Activated naive CD4-positive, alpha-beta T cell treated with anti-CD3 and anti-CD28 coated beads for 36 hours (primary cell): ENCODE measurements at regions of chr14 and their contacts with region 1.

Region 1: GRCh38 chr14:81220830-81221578 is at the start of gene GTF2A1:
- DNase-seq: peak; percentile 94
- H3K4me3 Mint-ChIP-seq: peak within 1 kb of the TSS; percentile 94
- H3K27ac Mint-ChIP-seq: peak within 1 kb of the TSS; percentile 100
- H3K4me1 Mint-ChIP-seq: peaks cover 25% of the 10 kb centered on the region
- H3K27me3 Mint-ChIP-seq: no peaks in the 10 kb centered on the region
- total RNA-seq, gene GTF2A1: 38.3 to 42.9 TPM

Region 2: GRCh38 chr14:80587075-80587724 is 633.8 kb before region 1 on chr14:
- CTCF ChIA-PET with region 1: no interaction called
- intact Hi-C with region 1: loop called (anchors 1 kb)
- DNase-seq: peak; percentile 9
- H3K4me3 Mint-ChIP-seq: no peak overlapping the region
- H3K27ac Mint-ChIP-seq: peak overlapping the region; percentile 39
- H3K4me1 Mint-ChIP-seq: peaks cover 14% of the 10 kb centered on the region
- H3K27me3 Mint-ChIP-seq: no peaks in the 10 kb centered on the region

Region 3: DNA sequence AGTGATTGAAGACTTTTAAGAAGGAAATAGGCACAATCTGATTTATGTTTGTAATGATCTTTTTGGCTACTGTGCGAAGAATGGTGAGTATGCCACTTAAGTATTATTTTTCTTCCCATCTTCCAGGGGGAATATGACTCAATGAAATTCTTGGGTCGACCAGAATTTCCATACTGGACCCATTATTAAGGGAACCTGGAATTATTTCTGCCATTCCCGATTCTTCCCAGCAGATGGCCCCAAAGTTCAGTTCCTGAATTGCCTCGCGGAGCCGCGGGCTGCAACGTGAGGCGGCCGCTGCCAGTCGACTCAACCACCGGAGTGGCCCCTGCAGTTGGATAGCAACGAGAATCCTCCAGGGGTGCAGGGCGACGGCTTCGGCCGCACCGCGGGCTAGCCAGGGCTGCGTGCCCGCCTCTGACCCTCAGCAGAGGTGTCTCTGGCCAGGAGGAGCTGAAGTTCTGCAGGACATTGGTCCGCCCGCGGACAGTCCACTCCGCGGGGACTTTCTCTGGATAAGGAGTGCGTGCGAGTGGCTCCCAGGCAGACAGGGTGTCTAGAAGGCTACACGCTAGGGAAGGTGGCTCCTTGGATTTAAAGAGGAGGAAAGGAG is 266.2 kb before region 1 on chr14:
- CTCF ChIA-PET with region 1: no interaction called
- intact Hi-C with region 1: loop called (anchors 1 kb)
- DNase-seq: peak; percentile 81
- H3K4me3 Mint-ChIP-seq: peak overlapping the region; percentile 75
- H3K27ac Mint-ChIP-seq: no peak overlapping the region
- H3K4me1 Mint-ChIP-seq: peaks cover 32% of the 10 kb centered on the region
- H3K27me3 Mint-ChIP-seq: peaks cover 10% of the 10 kb centered on the region

Region 4: DNA sequence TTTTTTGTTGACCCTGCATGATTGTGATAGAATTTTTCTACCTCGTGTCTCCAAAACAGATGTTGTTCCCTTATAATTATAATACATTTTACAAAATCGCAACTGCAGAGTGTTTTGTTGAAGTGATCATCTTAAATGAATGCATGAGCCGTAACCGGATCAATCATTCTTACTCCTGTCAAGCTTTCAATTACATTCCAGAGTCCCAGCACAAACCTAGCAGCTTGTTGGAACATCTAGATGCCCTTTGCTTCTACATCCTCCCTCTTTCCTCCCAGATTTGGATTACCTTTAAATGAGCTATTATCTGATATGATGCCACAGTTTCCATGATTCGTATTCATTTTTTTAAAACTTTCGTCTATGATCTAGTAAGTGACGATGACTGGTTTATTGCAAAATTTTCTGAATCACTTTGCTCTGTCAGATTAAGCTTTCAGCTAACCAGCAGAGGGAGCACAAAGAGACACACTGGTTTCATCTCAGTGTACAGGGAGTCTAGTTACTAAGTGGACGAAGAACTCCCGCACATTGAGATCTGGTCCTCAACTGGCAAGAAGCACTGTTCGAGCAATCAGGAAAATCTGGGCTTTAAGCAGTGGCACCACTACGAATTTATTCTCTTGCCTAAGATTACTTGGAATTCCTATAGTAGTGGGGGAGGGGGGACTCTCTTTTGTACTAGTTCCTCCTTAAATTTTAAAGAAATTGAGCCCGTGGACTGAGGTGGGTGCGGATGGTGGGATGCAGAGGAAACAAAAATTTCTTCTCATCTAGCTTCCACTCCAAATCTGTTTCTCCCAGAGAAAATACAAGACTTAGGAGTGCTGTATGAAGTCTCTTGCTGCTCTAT is 224.7 kb before region 1 on chr14:
- CTCF ChIA-PET with region 1: no interaction called
- intact Hi-C with region 1: loop called (anchors 1 kb)
- DNase-seq: peak; percentile 38
- H3K4me3 Mint-ChIP-seq: no peak overlapping the region
- H3K27ac Mint-ChIP-seq: no peak overlapping the region
- H3K4me1 Mint-ChIP-seq: peaks cover 7% of the 10 kb centered on the region
- H3K27me3 Mint-ChIP-seq: peaks cover 14% of the 10 kb centered on the region

Region 5: GRCh38 chr14:81137316-81137715 is 83.7 kb before region 1 on chr14:
- CTCF ChIA-PET with region 1: no interaction called
- intact Hi-C with region 1: no loop called
- DNase-seq: no peak
- H3K4me3 Mint-ChIP-seq: no peak overlapping the region
- H3K27ac Mint-ChIP-seq: no peak overlapping the region
- H3K4me1 Mint-ChIP-seq: no peaks in the 10 kb centered on the region
- H3K27me3 Mint-ChIP-seq: peaks cover 1% of the 10 kb centered on the region

Region 6: DNA sequence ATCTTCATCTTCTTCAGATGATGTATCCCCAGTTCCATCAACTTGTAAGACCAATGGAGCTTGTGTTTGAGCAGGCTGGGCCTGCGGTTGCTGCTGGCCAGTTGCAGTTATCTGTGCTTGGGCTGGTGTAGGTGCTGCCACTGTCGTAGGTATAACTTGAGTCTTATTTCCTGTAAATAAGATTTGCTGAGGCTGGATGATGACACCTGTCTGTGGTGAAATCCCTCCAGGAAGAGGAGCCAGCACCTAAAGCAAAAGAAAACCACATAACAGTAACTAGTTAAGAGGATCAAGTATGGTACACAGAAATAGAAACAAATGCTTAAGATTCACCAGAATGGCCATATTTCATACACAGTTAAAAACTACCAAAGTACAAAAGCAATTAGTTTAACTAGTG is 28.4 kb before region 1 on chr14:
- CTCF ChIA-PET with region 1: interaction called, 6 read pairs
- intact Hi-C with region 1: loop called (anchors 1 kb)
- DNase-seq: peak; percentile 54
- H3K4me3 Mint-ChIP-seq: peak overlapping the region; percentile 59
- H3K27ac Mint-ChIP-seq: peak overlapping the region; percentile 87
- H3K4me1 Mint-ChIP-seq: peaks cover 51% of the 10 kb centered on the region
- H3K27me3 Mint-ChIP-seq: no peaks in the 10 kb centered on the region

Region 7: GRCh38 chr14:81436296-81437138 is 215.5 kb after region 1 on chr14:
- CTCF ChIA-PET with region 1: no interaction called
- intact Hi-C with region 1: loop called (anchors 5 kb)
- DNase-seq: peak; percentile 40
- H3K4me3 Mint-ChIP-seq: peak overlapping the region; percentile 65
- H3K27ac Mint-ChIP-seq: no peak overlapping the region
- H3K4me1 Mint-ChIP-seq: peaks cover 10% of the 10 kb centered on the region
- H3K27me3 Mint-ChIP-seq: peaks cover 65% of the 10 kb centered on the region

Region 8: DNA sequence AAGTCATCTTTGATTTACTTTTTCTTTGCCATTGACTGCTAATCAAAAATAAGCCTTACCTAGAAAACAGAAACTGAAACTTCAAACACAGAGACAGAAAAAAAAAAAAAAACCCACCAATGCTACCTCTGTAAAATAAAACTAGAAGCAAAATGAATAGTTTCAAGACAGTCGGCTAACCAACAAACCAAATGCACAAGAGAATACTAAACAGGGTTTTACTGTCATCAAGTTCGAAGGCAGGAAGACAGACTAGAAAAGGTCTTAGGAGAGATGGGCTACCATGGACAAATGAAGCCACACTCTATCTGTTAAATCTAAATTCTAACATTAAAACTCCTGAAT is 253.1 kb after region 1 on chr14:
- CTCF ChIA-PET with region 1: interaction called, 4 read pairs
- intact Hi-C with region 1: loop called (anchors 1 kb)
- DNase-seq: no peak
- H3K4me3 Mint-ChIP-seq: peak overlapping the region; percentile 55
- H3K27ac Mint-ChIP-seq: peak overlapping the region; percentile 92
- H3K4me1 Mint-ChIP-seq: peaks cover 60% of the 10 kb centered on the region
- H3K27me3 Mint-ChIP-seq: no peaks in the 10 kb centered on the region